IMR-90 (cell line): ENCODE measurements at regions of chr12 and their contacts with region 1.

Region 1: DNA sequence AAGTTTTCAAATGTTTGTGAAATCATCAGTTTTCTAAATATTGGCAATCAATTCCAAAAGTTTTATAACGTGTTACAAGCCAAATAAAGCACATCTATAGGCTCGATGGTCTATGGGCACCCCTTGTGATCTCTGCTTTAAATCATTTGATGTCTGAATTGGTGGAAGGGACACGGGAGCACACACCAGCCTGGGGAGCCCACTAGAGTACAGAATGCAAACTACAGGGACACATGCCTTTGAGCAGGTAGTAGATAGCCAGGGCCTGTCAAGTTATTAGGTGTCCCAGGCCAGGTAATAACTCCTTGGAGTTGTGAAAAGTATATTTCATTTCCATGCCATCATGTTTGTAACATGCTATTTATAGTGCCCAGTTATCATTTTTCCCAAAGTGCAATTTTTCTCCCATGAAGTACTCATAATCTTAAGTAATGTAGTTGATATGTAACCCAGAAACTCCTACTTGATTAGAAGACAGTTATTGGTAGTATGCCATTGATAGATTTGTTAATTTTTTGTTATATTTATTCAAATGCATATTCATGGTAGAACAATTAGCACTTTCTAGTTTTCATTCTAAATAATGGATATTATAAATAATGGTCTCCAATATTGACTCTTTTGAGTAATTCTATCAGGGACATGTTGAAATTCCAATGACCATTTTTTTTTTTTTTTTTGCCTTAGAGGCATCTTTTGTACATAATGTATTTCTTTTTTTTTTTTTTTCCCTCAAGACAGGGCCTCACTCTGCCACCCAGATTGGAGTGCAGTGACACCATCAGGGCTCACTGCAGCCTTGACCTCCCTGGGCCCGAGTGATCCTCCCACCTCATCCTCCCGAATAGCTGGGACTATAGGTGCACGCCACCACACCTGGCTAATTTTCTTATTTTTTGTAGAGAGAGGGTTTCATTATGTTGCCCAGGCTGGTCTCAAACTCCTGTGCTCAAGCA is 96.9 kb upstream of the FGD4 start:
- DNase-seq: no peak
- ATAC-seq: peak; percentile 51; the same call in 1 of the 2 replicates
- H3K4me3 ChIP-seq: no peak overlapping the region
- H3K27ac ChIP-seq: no peak overlapping the region
- H3K4me1 ChIP-seq: no peaks in the 10 kb centered on the region
- H3K27me3 ChIP-seq: no peaks in the 10 kb centered on the region
- CTCF ChIP-seq: peak; percentile 35
- POLR2A ChIP-seq: no peak
- RAD21 ChIP-seq: peak; percentile 39

Region 2: GRCh38 chr12:31682136-31682962 is 620.1 kb before region 1 on chr12:
- CTCF ChIA-PET with region 1: no interaction called
- POLR2A ChIA-PET with region 1: no interaction called
- dilution Hi-C with region 1: no loop called
- in situ Hi-C with region 1: loop called (anchors 10 kb)
- intact Hi-C with region 1: loop called (anchors 2 kb)
- DNase-seq: peak; percentile 82
- ATAC-seq: peak; percentile 81
- H3K4me3 ChIP-seq: no peak overlapping the region
- H3K27ac ChIP-seq: no peak overlapping the region
- H3K4me1 ChIP-seq: no peaks in the 10 kb centered on the region
- H3K27me3 ChIP-seq: no peaks in the 10 kb centered on the region
- CTCF ChIP-seq: peak; percentile 84
- POLR2A ChIP-seq: no peak
- RAD21 ChIP-seq: peak; percentile 96

Region 3: DNA sequence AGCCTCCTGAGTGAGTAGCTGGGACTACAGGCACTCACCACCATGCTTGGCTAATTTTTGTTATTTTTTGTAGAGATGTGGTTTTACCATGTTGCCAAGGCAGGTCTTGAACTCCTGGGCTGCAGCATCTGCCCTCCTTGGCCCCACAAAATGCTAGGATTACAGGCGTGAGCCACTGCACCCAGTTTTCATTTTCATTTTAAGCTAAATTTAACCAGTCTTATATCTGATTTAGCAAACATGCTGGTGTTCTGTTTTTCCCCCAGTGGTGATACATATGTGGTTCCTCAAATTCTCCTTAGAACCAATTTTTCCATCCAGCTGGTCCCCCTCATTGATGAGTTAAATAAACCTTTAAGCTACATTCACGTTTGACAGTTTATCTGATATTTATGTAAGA is 239.6 kb before region 1 on chr12:
- CTCF ChIA-PET with region 1: interaction called, 3 read pairs
- POLR2A ChIA-PET with region 1: no interaction called
- dilution Hi-C with region 1: no loop called
- in situ Hi-C with region 1: loop called (anchors 5 kb)
- intact Hi-C with region 1: loop called (anchors 2 kb)
- DNase-seq: no peak
- ATAC-seq: no peak
- H3K4me3 ChIP-seq: no peak overlapping the region
- H3K27ac ChIP-seq: no peak overlapping the region
- H3K4me1 ChIP-seq: no peaks in the 10 kb centered on the region
- H3K27me3 ChIP-seq: no peaks in the 10 kb centered on the region
- CTCF ChIP-seq: no peak
- POLR2A ChIP-seq: no peak
- RAD21 ChIP-seq: no peak

Region 4: GRCh38 chr12:32106517-32107358 is 195.8 kb before region 1 on chr12 and contains the start of gene BICD1:
- CTCF ChIA-PET with region 1: no interaction called
- POLR2A ChIA-PET with region 1: no interaction called
- dilution Hi-C with region 1: no loop called
- in situ Hi-C with region 1: no loop called
- intact Hi-C with region 1: loop called (anchors 2 kb)
- DNase-seq: peak; percentile 87
- ATAC-seq: peak; percentile 91
- H3K4me3 ChIP-seq: peak within 1 kb of the TSS; percentile 85
- H3K27ac ChIP-seq: peak within 1 kb of the TSS; percentile 91
- H3K4me1 ChIP-seq: peaks cover 4% of the 10 kb centered on the region
- H3K27me3 ChIP-seq: no peaks in the 10 kb centered on the region
- CTCF ChIP-seq: peak; percentile 58
- POLR2A ChIP-seq: peak; percentile 95
- RAD21 ChIP-seq: peak; percentile 27
- total RNA-seq, gene BICD1: 17.2 and 25.0 TPM in 2 replicates